Mammary epithelial cell (primary cell): ENCODE measurements at regions of chr12 and their contacts with region 1.

Region 1: GRCh38 chr12:49974231-49974675 is 1.5 kb downstream of the AQP6 start:
- DNase-seq: no peak
- H3K4me3 ChIP-seq: no peak overlapping the region
- H3K27ac ChIP-seq: no peak overlapping the region
- H3K4me1 ChIP-seq: peaks cover 11% of the 10 kb centered on the region
- H3K27me3 ChIP-seq: no peaks in the 10 kb centered on the region
- CTCF ChIP-seq: peak in 1 of 2 donors; percentile 42

Region 2: DNA sequence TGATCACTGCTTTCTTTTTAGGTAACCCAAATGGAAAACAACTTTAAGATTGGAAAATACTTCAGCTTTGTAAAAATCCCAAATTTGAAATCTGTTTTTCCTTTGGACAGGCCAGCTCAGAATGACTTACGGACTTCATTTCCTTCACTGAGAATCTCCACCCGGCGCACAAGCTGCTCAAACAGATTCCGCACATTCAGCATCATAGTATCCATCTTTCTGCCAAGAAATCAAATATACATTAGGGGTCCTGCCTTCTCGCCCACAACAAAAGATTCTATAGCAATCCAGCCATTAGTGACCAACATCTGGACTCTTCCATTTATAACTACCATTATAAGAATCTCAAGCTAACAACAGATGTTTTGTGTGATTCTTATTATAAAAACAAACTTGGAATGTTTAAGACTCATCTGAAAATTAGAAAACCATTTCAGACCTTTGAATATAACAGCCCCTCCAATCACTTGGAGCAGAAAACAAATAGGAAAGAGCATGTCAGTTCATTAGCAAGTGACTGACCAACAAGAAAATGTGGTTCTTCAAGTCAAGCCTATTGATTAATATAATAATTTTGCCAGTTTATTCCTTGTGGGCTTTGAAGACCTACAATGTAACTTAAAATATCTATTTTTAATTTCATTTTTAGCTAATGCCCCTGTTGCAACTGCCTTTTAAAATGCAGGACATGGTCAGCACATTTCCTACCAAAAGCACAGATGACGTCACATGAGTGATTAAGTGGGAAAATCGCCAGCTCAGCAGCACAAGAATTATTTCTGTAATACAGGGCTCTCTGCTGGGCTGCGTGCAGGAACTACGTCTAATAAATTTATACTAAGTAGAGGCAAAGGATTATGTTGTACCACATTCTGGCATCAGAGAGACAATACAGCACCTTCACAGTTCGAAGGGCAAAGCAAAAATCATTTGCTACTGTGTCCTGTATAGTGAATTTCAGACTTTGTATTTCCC is 42.5 kb after region 1 on chr12:
- CTCF ChIA-PET with region 1: no interaction called
- dilution Hi-C with region 1: no loop called
- in situ Hi-C with region 1: no loop called
- intact Hi-C with region 1: no loop called
- DNase-seq: peak; percentile 16
- H3K4me3 ChIP-seq: no peak overlapping the region
- H3K27ac ChIP-seq: no peak overlapping the region
- H3K4me1 ChIP-seq: peaks cover 4% of the 10 kb centered on the region
- H3K27me3 ChIP-seq: no peaks in the 10 kb centered on the region
- CTCF ChIP-seq: no peak

Region 3: GRCh38 chr12:50050410-50051098 is 76.3 kb after region 1 on chr12:
- CTCF ChIA-PET with region 1: no interaction called
- dilution Hi-C with region 1: no loop called
- in situ Hi-C with region 1: loop called (anchors 5 kb)
- intact Hi-C with region 1: no loop called
- DNase-seq: no peak
- H3K4me3 ChIP-seq: no peak overlapping the region
- H3K27ac ChIP-seq: no peak overlapping the region
- H3K4me1 ChIP-seq: no peaks in the 10 kb centered on the region
- H3K27me3 ChIP-seq: peaks cover 6% of the 10 kb centered on the region
- CTCF ChIP-seq: no peak

Region 4: GRCh38 chr12:50992819-50993218 is 1018.6 kb after region 1 on chr12:
- CTCF ChIA-PET with region 1: no interaction called
- dilution Hi-C with region 1: no loop called
- in situ Hi-C with region 1: no loop called
- intact Hi-C with region 1: no loop called
- DNase-seq: no peak
- H3K4me3 ChIP-seq: no peak overlapping the region
- H3K27ac ChIP-seq: no peak overlapping the region
- H3K4me1 ChIP-seq: no peaks in the 10 kb centered on the region
- H3K27me3 ChIP-seq: no peaks in the 10 kb centered on the region
- CTCF ChIP-seq: no peak